HepG2 (cell line): ENCODE measurements at regions of chr2 and their contacts with region 1.

Region 1: DNA sequence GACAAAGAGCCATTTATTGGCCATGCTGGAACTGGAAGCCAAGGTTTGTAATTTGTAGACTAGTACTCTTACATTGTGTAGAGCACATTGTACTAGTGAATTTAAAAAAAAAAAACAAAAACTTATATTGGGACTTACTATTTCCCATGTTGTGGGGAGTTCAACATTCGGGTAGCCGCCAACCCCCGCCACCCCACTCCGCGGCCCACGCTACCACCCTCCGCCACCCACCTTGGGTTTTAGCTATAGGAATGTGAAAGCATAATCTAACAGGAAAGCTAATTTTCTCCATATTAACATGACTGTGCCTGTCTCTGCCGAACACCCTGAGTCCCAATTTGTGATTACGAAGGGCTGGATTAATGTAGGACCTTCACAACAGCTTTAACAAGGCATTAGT is 275.8 kb downstream of the FIGN start:
- DNase-seq: no peak
- ATAC-seq: no peak
- H3K4me3 ChIP-seq: no peak overlapping the region
- H3K27ac ChIP-seq: no peak overlapping the region
- H3K4me1 ChIP-seq: no peaks in the 10 kb centered on the region
- H3K27me3 ChIP-seq: no peaks in the 10 kb centered on the region
- CTCF ChIP-seq: no peak
- EP300 ChIP-seq: no peak
- POLR2A ChIP-seq: no peak
- RAD21 ChIP-seq: no peak

Region 2: DNA sequence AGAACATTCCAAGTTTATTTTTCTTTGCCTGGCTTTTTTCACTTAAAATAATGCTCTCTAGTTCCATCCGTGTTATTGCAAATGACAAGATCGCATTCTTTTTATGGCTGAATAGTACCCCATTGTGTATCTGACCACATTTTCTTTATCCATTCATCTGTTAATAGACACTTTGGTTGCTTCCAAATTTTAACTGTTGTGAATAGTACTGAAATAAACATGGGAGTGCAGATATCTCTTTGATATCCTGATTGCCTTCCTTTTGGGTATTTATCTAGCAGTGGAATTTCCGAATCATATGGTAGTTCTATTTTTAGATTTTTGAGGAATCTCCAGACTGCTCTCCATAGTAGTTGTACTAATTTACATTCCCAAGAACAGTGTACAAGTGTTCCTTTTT is 45.3 kb after region 1 on chr2:
- CTCF ChIA-PET with region 1: no interaction called
- POLR2A ChIA-PET with region 1: no interaction called
- in situ Hi-C with region 1: no loop called
- intact Hi-C with region 1: loop called (anchors 1 kb)
- DNase-seq: no peak
- ATAC-seq: no peak
- H3K4me3 ChIP-seq: no peak overlapping the region
- H3K27ac ChIP-seq: no peak overlapping the region
- H3K4me1 ChIP-seq: no peaks in the 10 kb centered on the region
- H3K27me3 ChIP-seq: no peaks in the 10 kb centered on the region
- CTCF ChIP-seq: no peak
- EP300 ChIP-seq: no peak
- POLR2A ChIP-seq: no peak
- RAD21 ChIP-seq: no peak